ENCODE measurements at regions of chr22 and their contacts with region 1.

Region 1: GRCh38 chr22:17501679-17502285 is 61.5 kb upstream of the SLC25A18 start:
- DNase-seq: peak; percentile 79
- H3K4me3 Mint-ChIP-seq: no peak overlapping the region
- H3K27ac Mint-ChIP-seq: no peak overlapping the region
- H3K4me1 Mint-ChIP-seq: peaks cover 13% of the 10 kb centered on the region
- H3K27me3 Mint-ChIP-seq: no peaks in the 10 kb centered on the region
- CTCF ChIP-seq: peak; percentile 76

Region 2: GRCh38 chr22:16917144-16918003 is 584.4 kb before region 1 on chr22:
- CTCF ChIA-PET with region 1: interaction called, 18 read pairs
- POLR2A ChIA-PET with region 1: no interaction called
- intact Hi-C with region 1: loop called (anchors 1 kb)
- DNase-seq: peak; percentile 75
- H3K4me3 Mint-ChIP-seq: no peak overlapping the region
- H3K27ac Mint-ChIP-seq: no peak overlapping the region
- H3K4me1 Mint-ChIP-seq: peaks cover 7% of the 10 kb centered on the region
- H3K27me3 Mint-ChIP-seq: peaks cover 15% of the 10 kb centered on the region
- CTCF ChIP-seq: peak; percentile 60

Region 3: GRCh38 chr22:17077255-17077654 is 424.5 kb before region 1 on chr22:
- CTCF ChIA-PET with region 1: interaction called, 67 read pairs
- POLR2A ChIA-PET with region 1: interaction called, 8 read pairs
- intact Hi-C with region 1: loop called (anchors 1 kb)
- DNase-seq: no peak
- H3K4me3 Mint-ChIP-seq: no peak overlapping the region
- H3K27ac Mint-ChIP-seq: no peak overlapping the region
- H3K4me1 Mint-ChIP-seq: no peaks in the 10 kb centered on the region
- H3K27me3 Mint-ChIP-seq: no peaks in the 10 kb centered on the region
- CTCF ChIP-seq: no peak

Region 4: GRCh38 chr22:17176715-17177114 is 325.1 kb before region 1 on chr22:
- CTCF ChIA-PET with region 1: interaction called, 189 read pairs
- POLR2A ChIA-PET with region 1: interaction called, 38 read pairs
- intact Hi-C with region 1: loop called (anchors 1 kb)
- DNase-seq: no peak
- H3K4me3 Mint-ChIP-seq: no peak overlapping the region
- H3K27ac Mint-ChIP-seq: no peak overlapping the region
- H3K4me1 Mint-ChIP-seq: no peaks in the 10 kb centered on the region
- H3K27me3 Mint-ChIP-seq: peaks cover 18% of the 10 kb centered on the region
- CTCF ChIP-seq: no peak

Region 5: GRCh38 chr22:17213976-17214375 is 287.8 kb before region 1 on chr22:
- CTCF ChIA-PET with region 1: interaction called, 11 read pairs
- POLR2A ChIA-PET with region 1: no interaction called
- intact Hi-C with region 1: no loop called
- DNase-seq: peak; percentile 47
- H3K4me3 Mint-ChIP-seq: no peak overlapping the region
- H3K27ac Mint-ChIP-seq: no peak overlapping the region
- H3K4me1 Mint-ChIP-seq: no peaks in the 10 kb centered on the region
- H3K27me3 Mint-ChIP-seq: no peaks in the 10 kb centered on the region
- CTCF ChIP-seq: peak; percentile 35

Region 6: DNA sequence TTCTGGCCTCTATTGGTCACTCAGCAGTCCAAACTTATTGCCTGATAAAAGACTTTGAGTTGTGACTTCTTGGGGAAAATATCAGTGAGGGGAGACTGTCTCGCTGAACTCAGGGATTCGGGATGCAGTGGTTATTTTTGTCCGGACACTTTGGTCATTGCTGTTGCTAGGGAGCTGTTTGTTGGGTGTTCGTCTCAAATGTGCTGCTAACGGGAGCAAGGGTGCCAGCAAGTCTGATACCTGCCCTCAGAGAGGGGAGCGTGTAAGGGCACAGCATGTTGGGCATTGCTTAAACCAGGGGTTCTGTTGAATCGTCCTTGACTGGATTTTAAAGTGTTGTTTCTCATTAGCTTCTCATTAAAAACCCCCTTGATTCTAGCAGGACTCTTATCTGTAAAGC is 12.3 kb after region 1 on chr22:
- CTCF ChIA-PET with region 1: interaction called, 17 read pairs
- POLR2A ChIA-PET with region 1: no interaction called
- intact Hi-C with region 1: no loop called
- DNase-seq: no peak
- H3K4me3 Mint-ChIP-seq: no peak overlapping the region
- H3K27ac Mint-ChIP-seq: no peak overlapping the region
- H3K4me1 Mint-ChIP-seq: peaks cover 5% of the 10 kb centered on the region
- H3K27me3 Mint-ChIP-seq: peaks cover 54% of the 10 kb centered on the region
- CTCF ChIP-seq: no peak

Measured in MCF 10A (cell line).